ENCODE measurements at regions of chr20 and their contacts with region 1.

Region 1: GRCh38 chr20:8722276-8722928 is 346.5 kb upstream of the PLCB4 start:
- DNase-seq: no peak
- ATAC-seq: peak; percentile 85 to 92
- H3K4me3 ChIP-seq: no peak overlapping the region
- H3K27ac ChIP-seq: no peak overlapping the region
- H3K4me1 ChIP-seq: no peaks in the 10 kb centered on the region
- H3K27me3 ChIP-seq: no peaks in the 10 kb centered on the region
- CTCF ChIP-seq: peak; percentile 76

Region 2: GRCh38 chr20:8039042-8039441 is 683.4 kb before region 1 on chr20:
- intact Hi-C with region 1: loop called (anchors 5 kb)
- DNase-seq: no peak
- ATAC-seq: no peak
- H3K4me3 ChIP-seq: no peak overlapping the region
- H3K27ac ChIP-seq: no peak overlapping the region
- H3K4me1 ChIP-seq: no peaks in the 10 kb centered on the region
- H3K27me3 ChIP-seq: no peaks in the 10 kb centered on the region
- CTCF ChIP-seq: no peak

Region 3: DNA sequence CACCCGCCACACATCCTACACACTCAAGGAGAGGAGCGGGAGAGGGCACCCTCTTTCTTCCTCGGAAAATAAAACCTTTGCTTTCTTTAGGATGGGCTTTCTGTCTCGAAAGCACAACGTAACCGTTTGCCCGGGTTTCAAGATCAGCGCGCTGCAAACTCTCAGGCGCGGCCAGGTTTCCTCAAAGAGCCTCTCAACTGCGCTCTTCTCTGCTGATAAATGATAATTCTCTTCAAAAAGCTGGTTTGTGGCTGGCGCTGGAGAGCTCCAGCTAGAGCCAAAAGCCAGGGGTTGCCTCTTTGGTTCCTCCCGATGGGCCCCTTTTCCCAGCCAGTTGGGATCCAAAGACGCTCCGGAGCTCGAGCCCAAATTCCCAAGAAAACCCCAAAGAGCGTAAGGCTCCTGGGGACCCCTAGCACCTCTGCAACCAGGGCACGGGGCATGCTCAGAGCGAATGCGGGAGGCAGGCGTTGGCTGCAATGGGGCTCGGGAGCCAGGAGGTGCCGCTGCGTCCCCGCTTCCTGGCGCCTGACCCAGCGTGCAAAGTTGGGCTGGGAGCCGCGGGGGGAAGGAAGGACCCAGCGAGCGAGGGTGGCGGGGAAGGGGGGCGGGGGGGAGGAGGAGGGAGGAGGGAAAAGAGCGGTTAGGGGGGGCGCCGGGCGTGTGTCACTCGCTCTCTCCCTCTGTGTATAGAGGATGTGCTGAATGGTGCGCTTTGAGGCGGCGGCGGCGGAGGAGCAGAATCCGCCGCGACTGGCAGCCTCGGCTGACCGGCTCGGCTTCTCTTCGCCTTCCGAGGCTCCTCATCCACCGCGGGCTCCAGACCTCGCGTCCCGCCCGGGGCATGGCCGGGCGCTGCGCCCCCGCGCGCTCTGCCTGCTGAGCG is 590.6 kb before region 1 on chr20 and contains the start of gene PLCB1:
- intact Hi-C with region 1: loop called (anchors 10 kb)
- DNase-seq: peak; percentile 85
- ATAC-seq: peak; percentile 93 to 96
- H3K4me3 ChIP-seq: peak within 1 kb of the TSS; percentile 65
- H3K27ac ChIP-seq: peak within 1 kb of the TSS; percentile 72
- H3K4me1 ChIP-seq: peaks cover 20% of the 10 kb centered on the region
- H3K27me3 ChIP-seq: peaks cover 11% of the 10 kb centered on the region
- CTCF ChIP-seq: peak; percentile 84
- total RNA-seq, gene PLCB1: 6.3 TPM

Region 4: GRCh38 chr20:8777911-8778310 is 55.5 kb after region 1 on chr20:
- intact Hi-C with region 1: no loop called
- DNase-seq: no peak
- ATAC-seq: no peak
- H3K4me3 ChIP-seq: no peak overlapping the region
- H3K27ac ChIP-seq: no peak overlapping the region
- H3K4me1 ChIP-seq: no peaks in the 10 kb centered on the region
- H3K27me3 ChIP-seq: no peaks in the 10 kb centered on the region
- CTCF ChIP-seq: no peak

Region 5: GRCh38 chr20:8964959-8965562 is 242.7 kb after region 1 on chr20:
- intact Hi-C with region 1: no loop called
- DNase-seq: no peak
- ATAC-seq: no peak
- H3K4me3 ChIP-seq: no peak overlapping the region
- H3K27ac ChIP-seq: no peak overlapping the region
- H3K4me1 ChIP-seq: no peaks in the 10 kb centered on the region
- H3K27me3 ChIP-seq: no peaks in the 10 kb centered on the region
- CTCF ChIP-seq: no peak